ENCODE measurements at regions of chr7 and their contacts with region 1.

Region 1: DNA sequence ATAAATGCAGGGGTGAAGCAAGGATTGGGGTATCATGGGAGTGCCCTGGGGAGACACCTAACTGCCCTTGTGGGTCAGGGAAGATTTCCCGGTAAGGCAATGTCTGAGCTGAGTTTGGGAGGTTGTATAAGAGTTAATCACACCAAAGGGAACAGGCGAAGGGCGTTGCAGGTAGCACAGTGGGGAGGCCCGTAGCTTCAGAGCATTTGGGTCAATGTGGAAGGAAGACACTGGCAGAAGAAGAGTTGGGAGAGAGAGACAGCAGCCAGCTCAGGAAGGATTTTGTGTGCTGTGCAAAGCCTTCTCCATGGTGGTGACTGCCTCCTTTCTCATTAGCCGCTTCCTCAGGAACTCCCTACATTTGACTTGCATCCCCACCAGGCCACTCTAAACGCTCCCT is 80.8 kb upstream of the LEP start:
- DNase-seq: no peak
- H3K4me3 ChIP-seq: no peak overlapping the region
- H3K27ac ChIP-seq: no peak overlapping the region
- H3K4me1 ChIP-seq: no peaks in the 10 kb centered on the region
- H3K27me3 ChIP-seq: peaks cover 0 to 19% of the 10 kb centered on the region in 2 donors
- CTCF ChIP-seq: no peak
- POLR2A ChIP-seq: no peak

Region 2: DNA sequence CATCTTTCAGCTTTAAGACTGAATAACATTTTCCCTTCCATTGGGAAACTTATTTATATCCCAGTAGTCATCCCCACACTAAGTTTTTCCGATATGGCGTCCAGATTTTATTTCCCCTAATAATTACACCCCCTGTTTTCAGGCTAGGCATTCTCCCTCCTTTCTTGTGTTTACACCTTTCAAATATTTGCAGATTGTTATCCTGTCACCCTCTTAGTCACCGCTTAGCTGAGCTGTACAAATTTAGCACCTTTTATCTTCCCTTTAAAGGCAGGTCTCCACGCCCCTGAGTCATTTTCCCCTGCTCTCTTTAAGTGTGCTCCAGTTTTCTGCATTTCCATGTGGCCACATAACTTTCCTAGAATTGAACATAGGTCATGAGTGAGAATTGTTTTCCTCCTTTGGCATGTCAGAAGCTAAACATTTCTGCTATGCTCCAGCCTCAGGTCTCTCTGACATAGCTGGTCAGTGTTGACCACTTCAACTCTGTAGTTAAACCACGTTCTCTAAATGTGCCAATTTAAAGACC is 176.4 kb before region 1 on chr7:
- intact Hi-C with region 1: no loop called
- DNase-seq: no peak
- H3K4me3 ChIP-seq: no peak overlapping the region
- H3K27ac ChIP-seq: no peak overlapping the region
- H3K4me1 ChIP-seq: no peaks in the 10 kb centered on the region
- H3K27me3 ChIP-seq: no peaks in the 10 kb centered on the region
- CTCF ChIP-seq: no peak
- POLR2A ChIP-seq: no peak

Region 3: DNA sequence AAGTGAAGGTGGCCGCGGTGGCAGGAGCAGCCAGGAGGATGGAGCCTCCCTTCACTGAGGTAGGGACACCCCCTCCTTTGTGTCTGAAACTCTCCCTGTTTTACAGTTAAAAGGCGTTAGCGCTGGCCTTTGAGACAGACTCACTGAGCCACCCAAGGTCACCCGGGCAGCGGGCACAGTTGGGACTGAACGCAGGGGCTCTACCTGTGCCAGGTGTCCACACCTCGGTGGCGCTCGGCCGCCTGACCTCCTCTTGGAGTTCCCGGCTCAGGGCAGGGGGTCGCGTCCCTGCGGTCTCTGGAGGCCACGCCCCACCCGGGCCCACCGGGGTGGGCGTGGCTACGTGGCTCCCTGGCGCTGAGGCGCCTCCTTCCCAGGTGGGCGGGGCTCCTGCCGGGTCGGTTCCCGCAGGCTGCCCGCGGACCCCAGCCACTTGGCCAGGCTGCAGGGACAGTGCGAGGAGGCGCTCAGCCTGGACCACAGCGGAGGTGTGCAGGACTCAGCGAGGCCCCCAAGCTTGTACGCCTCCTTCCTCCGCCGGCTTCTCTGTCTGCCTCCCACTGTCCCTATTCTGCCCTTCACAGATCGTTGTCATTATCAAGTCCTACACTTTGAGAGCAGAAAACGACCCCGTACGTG is 40.9 kb after region 1 on chr7:
- intact Hi-C with region 1: loop called (anchors 1 kb)
- DNase-seq: no peak
- H3K4me3 ChIP-seq: peak overlapping the region in 1 of 3 donors; percentile 6
- H3K27ac ChIP-seq: no peak overlapping the region
- H3K4me1 ChIP-seq: no peaks in the 10 kb centered on the region
- H3K27me3 ChIP-seq: peaks cover 0 to 24% of the 10 kb centered on the region in 2 donors
- CTCF ChIP-seq: no peak
- POLR2A ChIP-seq: no peak

Region 4: GRCh38 chr7:129066290-129067131 is 906.2 kb after region 1 on chr7:
- intact Hi-C with region 1: no loop called
- DNase-seq: no peak
- H3K4me3 ChIP-seq: no peak overlapping the region
- H3K27ac ChIP-seq: no peak overlapping the region
- H3K4me1 ChIP-seq: no peaks in the 10 kb centered on the region
- H3K27me3 ChIP-seq: no peaks in the 10 kb centered on the region
- CTCF ChIP-seq: no peak
- POLR2A ChIP-seq: no peak

Measured in breast epithelium (tissue), 4 donors.